ENCODE measurements at regions of chr4 and their contacts with region 1.

Region 1: DNA sequence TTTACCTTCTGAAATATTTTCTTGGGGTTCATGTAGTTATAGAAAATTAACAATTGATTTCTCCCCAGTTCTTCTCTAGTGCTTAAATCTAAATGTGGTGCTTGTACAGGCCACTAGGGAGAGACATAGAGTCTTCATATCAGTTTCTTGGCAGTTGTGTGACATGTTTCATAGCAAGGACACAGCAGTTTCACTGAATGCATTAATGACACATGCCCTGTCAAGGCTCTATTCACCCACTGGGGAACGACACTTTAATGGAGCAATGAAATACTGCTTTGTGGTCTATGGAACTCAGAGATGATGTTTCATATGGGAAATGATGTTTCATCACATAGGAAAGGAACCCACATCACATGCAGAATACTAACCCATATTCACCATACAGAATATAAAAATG is 2.8 kb downstream of the VEGFC start:
- DNase-seq: peak in 1 of 5 donors; percentile 11
- ATAC-seq: peak; percentile 23 to 50 (median 48)
- H3K4me3 ChIP-seq: peak overlapping the region in 10 of 12 donors; percentile 65 to 87 (median 75)
- H3K27ac ChIP-seq: peak overlapping the region in 5 of 12 donors; percentile 57 to 91 (median 88)
- H3K4me1 ChIP-seq: peaks cover 0 to 18% (median 0%) of the 10 kb centered on the region in 12 donors
- H3K27me3 ChIP-seq: peaks cover 0 to 32% (median 0%) of the 10 kb centered on the region in 9 donors
- CTCF ChIP-seq: peak; percentile 36 to 75 (median 62)
- POLR2A ChIP-seq: no peak

Region 2: GRCh38 chr4:175988511-175988910 is 801.4 kb before region 1 on chr4:
- intact Hi-C with region 1: no loop called
- DNase-seq: no peak
- ATAC-seq: no peak
- H3K4me3 ChIP-seq: no peak overlapping the region
- H3K27ac ChIP-seq: no peak overlapping the region
- H3K4me1 ChIP-seq: no peaks in the 10 kb centered on the region
- H3K27me3 ChIP-seq: peaks cover 0 to 6% (median 0%) of the 10 kb centered on the region in 9 donors
- CTCF ChIP-seq: no peak
- POLR2A ChIP-seq: no peak

Region 3: DNA sequence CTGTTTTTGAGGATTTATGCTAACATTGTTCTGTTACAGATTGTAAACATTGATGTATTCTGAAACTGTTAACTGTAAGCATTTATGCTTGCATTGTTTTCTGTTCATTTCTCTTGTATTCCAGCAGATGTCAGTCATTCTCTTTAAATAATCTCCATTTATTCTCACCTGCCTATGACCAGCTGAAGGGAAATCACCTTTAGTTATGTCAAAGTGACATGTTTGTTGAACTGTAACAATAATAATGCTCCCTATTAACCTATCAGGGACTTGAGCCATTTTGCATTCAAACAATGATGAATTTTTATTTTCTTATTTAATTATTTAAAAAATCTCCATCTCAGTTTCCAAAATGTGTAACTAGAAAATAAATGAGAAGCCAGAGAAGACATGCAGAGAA is 412.2 kb before region 1 on chr4:
- intact Hi-C with region 1: loop called in 9 of 10 experiments (anchors 2 to 10 kb)
- DNase-seq: no peak
- ATAC-seq: peak in 1 of 4 donors; percentile 27
- H3K4me3 ChIP-seq: no peak overlapping the region
- H3K27ac ChIP-seq: no peak overlapping the region
- H3K4me1 ChIP-seq: no peaks in the 10 kb centered on the region
- H3K27me3 ChIP-seq: no peaks in the 10 kb centered on the region
- CTCF ChIP-seq: peak; percentile 22 to 62 (median 50)
- POLR2A ChIP-seq: no peak

Region 4: GRCh38 chr4:176563591-176563990 is 226.4 kb before region 1 on chr4:
- intact Hi-C with region 1: loop called in 6 of 10 experiments (anchors 2 to 10 kb)
- DNase-seq: no peak
- ATAC-seq: peak in 1 of 4 donors; percentile 60
- H3K4me3 ChIP-seq: no peak overlapping the region
- H3K27ac ChIP-seq: no peak overlapping the region
- H3K4me1 ChIP-seq: no peaks in the 10 kb centered on the region
- H3K27me3 ChIP-seq: no peaks in the 10 kb centered on the region
- CTCF ChIP-seq: peak in 9 of 12 donors; percentile 12 to 46 (median 29)
- POLR2A ChIP-seq: no peak

Region 5: DNA sequence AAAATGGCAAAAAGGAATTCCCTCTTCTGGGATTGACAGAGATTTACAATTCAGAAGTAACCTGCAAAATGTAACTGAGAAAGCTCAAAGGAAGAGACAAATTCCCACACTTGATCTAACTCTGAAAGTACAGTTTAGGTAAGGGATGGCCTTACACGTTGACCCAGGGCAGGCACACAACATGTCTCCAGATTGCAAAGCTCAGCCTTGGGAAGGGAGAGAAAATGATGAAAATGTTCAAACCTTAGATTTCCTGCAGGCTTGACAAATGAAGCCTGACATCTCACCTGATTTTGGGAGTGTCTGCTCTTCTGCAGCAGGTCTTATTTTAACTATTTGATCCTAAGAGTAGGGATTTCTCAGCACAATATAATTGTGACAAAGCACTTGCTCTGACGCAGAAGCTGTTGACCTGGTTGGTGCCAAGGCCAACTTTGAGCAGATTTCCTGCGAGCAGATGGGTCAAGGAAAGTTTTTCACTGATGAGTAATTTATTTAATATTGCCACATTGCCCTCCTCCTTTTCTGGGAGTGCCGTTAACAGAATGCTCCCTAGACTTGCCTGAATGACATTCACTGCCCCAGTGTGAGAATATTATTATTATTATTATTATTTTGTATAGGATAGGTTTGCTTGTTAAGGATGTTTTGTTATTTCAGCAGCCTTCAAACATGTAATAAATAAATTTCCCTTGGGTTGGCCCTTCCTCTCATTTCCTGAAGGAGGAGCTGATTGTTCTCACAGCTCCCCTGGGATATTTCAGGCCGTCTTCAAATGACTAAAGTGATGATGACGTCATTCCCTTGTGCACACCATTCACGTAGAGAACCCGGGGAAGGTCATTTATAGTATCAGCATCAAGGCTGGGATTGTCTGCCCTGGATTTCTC is 154.3 kb before region 1 on chr4:
- intact Hi-C with region 1: loop called in 1 of 10 experiments (anchors 5 kb)
- DNase-seq: peak in 2 of 5 donors; percentile 32 to 33
- ATAC-seq: peak; percentile 56 to 96 (median 71)
- H3K4me3 ChIP-seq: no peak overlapping the region
- H3K27ac ChIP-seq: peak overlapping the region in 8 of 12 donors; percentile 31 to 78 (median 64)
- H3K4me1 ChIP-seq: peaks cover 0 to 16% (median 2%) of the 10 kb centered on the region in 12 donors
- H3K27me3 ChIP-seq: no peaks in the 10 kb centered on the region
- CTCF ChIP-seq: peak in 1 of 12 donors; percentile 21
- POLR2A ChIP-seq: no peak

Region 6: DNA sequence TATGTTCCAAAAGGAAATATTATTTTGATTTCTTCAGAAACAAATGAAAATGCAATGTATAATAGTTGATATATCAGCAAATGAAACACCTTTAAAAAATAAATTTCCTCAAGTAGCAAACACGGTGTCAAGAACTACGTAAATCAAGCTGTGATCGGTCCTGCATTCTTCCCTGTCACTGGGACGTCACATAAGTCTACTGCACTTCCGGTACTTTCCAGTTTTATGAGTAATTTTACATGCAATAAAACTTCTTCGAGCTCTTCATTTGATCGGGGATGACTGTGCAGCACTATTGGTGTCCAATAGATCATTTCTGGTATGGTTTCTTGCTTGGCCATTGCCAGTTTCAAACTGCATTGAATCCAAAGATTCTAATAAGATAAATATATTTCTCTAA is 116.8 kb after region 1 on chr4:
- intact Hi-C with region 1: no loop called
- DNase-seq: no peak
- ATAC-seq: no peak
- H3K4me3 ChIP-seq: no peak overlapping the region
- H3K27ac ChIP-seq: no peak overlapping the region
- H3K4me1 ChIP-seq: no peaks in the 10 kb centered on the region
- H3K27me3 ChIP-seq: no peaks in the 10 kb centered on the region
- CTCF ChIP-seq: no peak
- POLR2A ChIP-seq: no peak

Region 7: DNA sequence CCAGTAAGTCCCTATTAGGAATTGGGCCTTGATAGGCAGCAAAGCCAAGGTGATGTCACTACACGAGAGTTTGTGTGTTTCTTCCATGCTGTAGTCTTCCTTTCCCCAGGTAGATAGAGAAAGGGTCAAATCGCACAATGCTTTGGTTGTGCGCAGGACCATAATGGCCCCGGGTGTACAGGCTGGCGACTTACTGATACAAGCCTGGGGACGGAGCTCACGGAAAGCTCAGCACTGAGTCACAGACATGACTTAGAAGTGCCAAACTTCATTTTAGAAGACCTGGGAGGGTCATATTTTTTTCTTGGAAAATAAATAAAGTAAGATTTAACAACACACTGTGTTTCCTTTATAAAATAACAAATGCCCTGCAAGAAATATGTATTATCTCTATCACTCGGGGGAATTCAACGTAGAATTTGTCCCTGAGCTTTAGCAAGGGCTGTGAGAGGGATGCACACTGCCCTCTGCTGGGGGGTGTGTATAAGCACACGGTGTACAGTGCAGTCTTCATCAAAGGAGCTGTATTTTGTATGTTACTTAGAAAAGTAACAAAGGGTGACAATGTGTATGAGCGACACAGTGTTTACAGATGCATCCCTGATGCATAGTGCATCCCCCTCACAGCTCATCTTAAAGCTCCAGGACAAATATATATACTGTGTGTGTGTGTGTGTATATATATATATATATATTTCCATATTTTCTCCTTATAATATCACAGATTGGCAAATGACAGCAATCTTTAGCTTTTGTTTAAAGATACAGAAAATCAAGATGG is 257.3 kb after region 1 on chr4:
- intact Hi-C with region 1: loop called in 9 of 10 experiments (anchors 5 to 10 kb)
- DNase-seq: peak; percentile 33 to 66 (median 53)
- ATAC-seq: peak in 3 of 4 donors; percentile 85 to 89 (median 88)
- H3K4me3 ChIP-seq: no peak overlapping the region
- H3K27ac ChIP-seq: no peak overlapping the region
- H3K4me1 ChIP-seq: no peaks in the 10 kb centered on the region
- H3K27me3 ChIP-seq: peaks cover 0 to 3% (median 0%) of the 10 kb centered on the region in 9 donors
- CTCF ChIP-seq: peak; percentile 73 to 92 (median 86)
- POLR2A ChIP-seq: no peak

Measured in heart left ventricle (tissue), 16 donors.